HepG2 (cell line): ENCODE measurements at regions of chr6 and their contacts with region 1.

Region 1: GRCh38 chr6:35920793-35921732 is at the start of gene SRPK1:
- DNase-seq: peak; percentile 87
- ATAC-seq: peak; percentile 86
- H3K4me3 ChIP-seq: peak within 1 kb of the TSS; percentile 72 to 93 (median 84)
- H3K27ac ChIP-seq: peak within 1 kb of the TSS; percentile 84
- H3K4me1 ChIP-seq: peaks cover 56% of the 10 kb centered on the region
- H3K27me3 ChIP-seq: no peaks in the 10 kb centered on the region; a peak in 1 of 5 replicates
- CTCF ChIP-seq: peak; percentile 16; the same call in 1 of the 2 replicates
- EP300 ChIP-seq: no peak
- POLR2A ChIP-seq: peak; percentile 97 to 98
- RAD21 ChIP-seq: peak; percentile 55
- total RNA-seq, gene SRPK1: 142 and 184 TPM in 2 replicates

Region 2: DNA sequence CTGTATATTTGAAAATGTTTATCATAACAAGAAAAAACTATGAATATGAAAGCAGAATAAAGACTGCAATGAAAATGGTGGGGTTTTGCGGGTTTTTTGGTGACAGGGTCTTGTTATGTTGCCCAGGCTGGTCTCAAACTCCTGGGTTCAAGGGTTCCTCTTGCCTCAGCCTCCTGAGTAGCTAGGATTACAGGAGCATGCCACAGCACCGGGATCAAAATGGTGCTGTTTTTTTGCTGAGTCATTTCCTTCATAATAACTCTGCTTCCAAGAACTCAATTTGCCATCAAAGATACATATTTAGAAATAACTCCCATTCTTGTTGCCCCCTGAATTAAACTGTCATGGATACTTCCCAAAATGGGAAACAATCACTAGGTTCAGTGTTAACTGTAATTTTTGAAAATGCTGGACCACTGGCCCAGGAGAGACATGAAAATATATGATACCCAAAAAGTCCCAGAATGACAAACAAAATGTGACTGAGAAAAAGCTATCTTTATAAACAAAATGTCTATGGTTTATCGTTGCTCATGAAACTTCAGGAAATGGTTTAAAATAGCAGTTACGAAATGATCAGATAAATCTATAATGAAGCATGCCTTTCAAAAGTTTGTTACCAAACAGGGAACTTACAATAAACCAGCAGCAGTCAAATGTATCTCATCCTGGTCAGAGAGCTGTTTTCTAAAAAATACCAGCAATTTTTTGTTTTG is 1256.6 kb before region 1 on chr6:
- CTCF ChIA-PET with region 1: no interaction called
- POLR2A ChIA-PET with region 1: no interaction called
- in situ Hi-C with region 1: no loop called
- intact Hi-C with region 1: loop called (anchors 5 kb)
- DNase-seq: peak; percentile 48
- ATAC-seq: no peak
- H3K4me3 ChIP-seq: no peak overlapping the region
- H3K27ac ChIP-seq: peak overlapping the region; percentile 67
- H3K4me1 ChIP-seq: peaks cover 98% of the 10 kb centered on the region
- H3K27me3 ChIP-seq: no peaks in the 10 kb centered on the region
- CTCF ChIP-seq: no peak
- EP300 ChIP-seq: no peak
- POLR2A ChIP-seq: no peak
- RAD21 ChIP-seq: no peak

Region 3: GRCh38 chr6:35973670-35974222 is 52.7 kb after region 1 on chr6:
- CTCF ChIA-PET with region 1: no interaction called
- POLR2A ChIA-PET with region 1: no interaction called
- in situ Hi-C with region 1: no loop called
- intact Hi-C with region 1: loop called (anchors 1 kb)
- DNase-seq: peak; percentile 93
- ATAC-seq: peak; percentile 85
- H3K4me3 ChIP-seq: peak overlapping the region in 2 of 3 experiments; percentile 13 to 23; a peak in 1 of 6 replicates
- H3K27ac ChIP-seq: peak overlapping the region; percentile 67
- H3K4me1 ChIP-seq: peaks cover 32% of the 10 kb centered on the region
- H3K27me3 ChIP-seq: no peaks in the 10 kb centered on the region
- CTCF ChIP-seq: no peak
- EP300 ChIP-seq: peak in 1 of 2 experiments; percentile 72; a peak in 2 of 4 replicates
- POLR2A ChIP-seq: no peak
- RAD21 ChIP-seq: peak; percentile 8; the same call in 1 of the 2 replicates